ENCODE measurements at regions of chr2 and their contacts with region 1.

Region 1: GRCh38 chr2:71331581-71332434 is at the start of gene ZNF638:
- DNase-seq: peak; percentile 96 to 97
- ATAC-seq: peak; percentile 98 to 99 (median 99)
- H3K4me3 ChIP-seq: peak within 1 kb of the TSS; percentile 93
- H3K27ac ChIP-seq: peak within 1 kb of the TSS; percentile 95
- H3K4me1 ChIP-seq: peaks cover 32% of the 10 kb centered on the region
- H3K27me3 ChIP-seq: no peaks in the 10 kb centered on the region
- CTCF ChIP-seq: peak; percentile 83
- total RNA-seq, gene ZNF638: 62.3 to 73.6 (median 65.4) TPM

Region 2: GRCh38 chr2:71226965-71227560 is 104.7 kb before region 1 on chr2 and contains the start of gene PAIP2B:
- intact Hi-C with region 1: loop called (anchors 1 to 5 kb)
- DNase-seq: peak; percentile 99
- ATAC-seq: peak; percentile 93 to 97 (median 94)
- H3K4me3 ChIP-seq: peak within 1 kb of the TSS; percentile 90
- H3K27ac ChIP-seq: peak within 1 kb of the TSS; percentile 95
- H3K4me1 ChIP-seq: no peaks in the 10 kb centered on the region
- H3K27me3 ChIP-seq: no peaks in the 10 kb centered on the region
- CTCF ChIP-seq: no peak
- total RNA-seq, gene PAIP2B: 14.0 to 47.4 (median 36.9) TPM

Region 3: GRCh38 chr2:71282495-71282894 is 49.3 kb before region 1 on chr2:
- intact Hi-C with region 1: loop called in 1 of 2 experiments (anchors 5 kb)
- DNase-seq: no peak
- ATAC-seq: peak in 3 of 4 donors; percentile 26 to 35 (median 35)
- H3K4me3 ChIP-seq: no peak overlapping the region
- H3K27ac ChIP-seq: peak overlapping the region; percentile 93
- H3K4me1 ChIP-seq: peaks cover 53% of the 10 kb centered on the region
- H3K27me3 ChIP-seq: no peaks in the 10 kb centered on the region
- CTCF ChIP-seq: peak; percentile 8

Region 4: GRCh38 chr2:71299507-71299906 is 32.3 kb before region 1 on chr2:
- intact Hi-C with region 1: loop called in 1 of 2 experiments (anchors 5 kb)
- DNase-seq: no peak
- ATAC-seq: peak in 1 of 4 donors; percentile 59
- H3K4me3 ChIP-seq: no peak overlapping the region
- H3K27ac ChIP-seq: no peak overlapping the region
- H3K4me1 ChIP-seq: peaks cover 10% of the 10 kb centered on the region
- H3K27me3 ChIP-seq: no peaks in the 10 kb centered on the region
- CTCF ChIP-seq: peak; percentile 75

Region 5: GRCh38 chr2:71379088-71379487 is 47.3 kb after region 1 on chr2:
- intact Hi-C with region 1: no loop called
- DNase-seq: no peak
- ATAC-seq: peak; percentile 37 to 78 (median 60)
- H3K4me3 ChIP-seq: no peak overlapping the region
- H3K27ac ChIP-seq: peak overlapping the region; percentile 5
- H3K4me1 ChIP-seq: peaks cover 3% of the 10 kb centered on the region
- H3K27me3 ChIP-seq: no peaks in the 10 kb centered on the region
- CTCF ChIP-seq: no peak

Measured in psoas muscle (tissue), 8 donors.